ENCODE measurements at regions of chr12 and their contacts with region 1.

Region 1: DNA sequence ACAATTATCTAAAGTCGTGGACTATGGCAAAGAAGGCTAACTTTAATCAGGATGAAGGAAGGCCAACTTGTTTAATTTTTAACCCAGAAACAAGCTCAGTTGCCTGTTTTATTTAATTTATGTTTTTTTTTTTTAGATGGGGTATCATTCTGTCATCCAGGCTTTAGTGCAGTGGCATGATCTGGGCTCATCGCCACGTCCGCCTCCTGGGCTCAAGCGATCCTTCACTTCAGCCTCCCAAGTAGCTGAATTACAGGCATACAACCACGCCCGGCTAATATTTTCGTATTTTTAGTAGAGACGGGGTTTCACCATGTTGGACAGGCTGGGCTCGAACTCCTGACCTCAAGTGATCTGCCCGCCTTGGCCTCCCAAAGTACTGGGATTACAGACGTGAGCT is 19.7 kb downstream of the NUDT4 start:
- DNase-seq: no peak
- ATAC-seq: no peak
- H3K4me3 Mint-ChIP-seq: no peak overlapping the region
- H3K27ac Mint-ChIP-seq: no peak overlapping the region
- H3K4me1 Mint-ChIP-seq: peaks cover 11% of the 10 kb centered on the region
- H3K27me3 Mint-ChIP-seq: no peaks in the 10 kb centered on the region
- CTCF ChIP-seq: no peak

Region 2: DNA sequence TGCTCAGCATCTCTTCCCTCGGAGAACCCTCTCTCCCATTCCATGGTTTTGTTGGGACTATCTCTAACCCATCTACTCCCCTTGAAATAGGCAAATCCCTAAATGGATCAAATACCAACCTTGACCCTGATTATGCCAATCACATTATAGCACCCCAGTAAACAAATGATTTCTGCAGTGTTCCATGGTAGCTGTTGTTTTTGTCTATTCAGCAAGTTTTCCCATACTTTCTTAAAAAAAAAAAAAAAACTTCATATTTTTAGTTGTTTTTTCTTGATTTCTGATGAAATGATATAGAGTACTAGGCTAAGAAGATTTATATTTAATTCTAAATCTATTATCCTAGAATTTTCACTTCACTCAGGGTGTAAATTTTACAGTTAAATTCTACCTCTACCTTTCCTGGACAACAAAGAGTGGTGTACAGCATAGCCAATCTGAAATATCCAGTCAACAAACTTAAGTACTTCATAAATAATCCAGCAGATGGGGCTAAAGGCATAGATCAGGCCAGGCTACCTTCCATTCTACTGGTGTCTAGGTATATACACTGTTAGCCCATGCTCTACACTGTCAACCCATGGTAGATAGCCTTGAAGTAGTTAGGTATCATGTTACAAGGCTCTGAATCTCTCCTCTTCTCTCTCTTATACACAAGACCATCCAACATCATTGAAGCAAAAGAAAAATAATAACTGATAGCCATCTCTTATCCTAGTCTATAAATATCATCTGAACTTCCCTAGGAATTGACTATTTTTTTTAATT is 612.4 kb before region 1 on chr12:
- CTCF ChIA-PET with region 1: interaction called, 23 read pairs
- POLR2A ChIA-PET with region 1: interaction called, 3 read pairs
- intact Hi-C with region 1: loop called (anchors 2 kb)
- DNase-seq: no peak
- ATAC-seq: peak; percentile 98
- H3K4me3 Mint-ChIP-seq: no peak overlapping the region
- H3K27ac Mint-ChIP-seq: no peak overlapping the region
- H3K4me1 Mint-ChIP-seq: no peaks in the 10 kb centered on the region
- H3K27me3 Mint-ChIP-seq: no peaks in the 10 kb centered on the region
- CTCF ChIP-seq: no peak

Region 3: GRCh38 chr12:92943482-92944250 is 453.7 kb before region 1 on chr12:
- CTCF ChIA-PET with region 1: no interaction called
- POLR2A ChIA-PET with region 1: interaction called, 15 read pairs
- intact Hi-C with region 1: no loop called
- DNase-seq: no peak
- ATAC-seq: no peak
- H3K4me3 Mint-ChIP-seq: no peak overlapping the region
- H3K27ac Mint-ChIP-seq: peak overlapping the region; percentile 46
- H3K4me1 Mint-ChIP-seq: peaks cover 36% of the 10 kb centered on the region
- H3K27me3 Mint-ChIP-seq: no peaks in the 10 kb centered on the region
- CTCF ChIP-seq: no peak

Region 4: DNA sequence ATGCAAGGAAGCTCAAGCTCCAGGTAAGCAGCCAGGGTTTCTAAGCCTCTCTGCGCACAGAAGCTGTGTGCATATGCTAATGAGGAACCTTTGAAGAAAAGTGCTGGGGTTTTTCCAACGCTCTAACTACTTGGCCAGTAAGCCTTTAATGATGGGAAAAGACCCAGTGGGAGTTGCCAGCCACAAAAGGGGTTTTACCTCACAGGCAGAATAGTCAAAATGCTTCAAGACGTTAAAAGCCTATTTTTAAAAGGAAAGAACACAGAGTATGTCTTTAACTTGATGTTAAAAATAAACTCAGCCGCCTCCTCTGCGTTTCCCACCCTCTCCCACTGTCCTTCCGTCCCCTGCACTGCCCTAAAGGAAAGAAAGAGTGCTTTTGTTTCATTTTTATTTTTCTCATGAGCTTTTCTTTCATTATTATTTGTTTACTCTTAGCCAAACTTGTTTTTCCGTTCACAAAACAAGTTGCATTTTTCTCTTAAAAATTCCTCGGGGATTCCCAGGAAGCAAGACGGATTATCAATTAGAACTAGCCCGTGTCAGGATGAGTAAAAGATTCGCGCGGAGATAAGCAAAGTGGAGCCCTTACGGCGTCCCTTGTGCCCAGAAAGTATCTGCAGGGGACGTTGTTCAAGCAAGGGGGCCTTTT is 229.4 kb before region 1 on chr12:
- CTCF ChIA-PET with region 1: no interaction called
- POLR2A ChIA-PET with region 1: no interaction called
- intact Hi-C with region 1: loop called (anchors 5 kb)
- DNase-seq: no peak
- ATAC-seq: peak; percentile 80
- H3K4me3 Mint-ChIP-seq: peak overlapping the region; percentile 80
- H3K27ac Mint-ChIP-seq: peak overlapping the region; percentile 80
- H3K4me1 Mint-ChIP-seq: peaks cover 60% of the 10 kb centered on the region
- H3K27me3 Mint-ChIP-seq: no peaks in the 10 kb centered on the region
- CTCF ChIP-seq: no peak

Region 5: DNA sequence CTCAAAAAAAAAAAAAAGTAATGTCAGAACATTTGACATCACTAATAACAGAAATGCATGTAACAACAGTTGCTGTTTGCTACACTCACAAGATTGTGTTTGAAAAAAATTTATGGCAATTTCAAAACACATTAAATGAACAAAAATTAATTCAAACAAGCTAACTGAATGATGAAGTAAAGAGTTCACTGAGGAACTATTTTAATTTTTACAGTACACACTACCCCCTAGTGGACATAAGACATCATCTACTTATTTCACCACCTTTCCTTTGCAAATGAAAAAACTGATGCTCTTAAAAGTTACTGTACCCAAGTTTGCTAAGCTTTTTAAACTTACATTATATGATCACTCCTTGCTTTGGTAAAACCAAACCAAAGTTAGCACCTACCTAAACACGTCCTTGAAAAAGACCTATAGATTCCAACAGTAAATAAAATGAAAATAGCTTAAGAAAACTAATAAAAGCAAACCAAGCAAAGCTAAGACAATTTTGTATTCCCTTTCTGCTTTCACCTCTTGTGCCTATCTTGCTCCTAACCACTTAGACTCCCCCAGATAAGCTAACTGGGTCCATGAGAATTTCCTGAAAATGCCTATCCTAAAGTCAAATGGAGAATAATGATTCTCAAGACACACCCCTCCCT is 22.1 kb after region 1 on chr12:
- CTCF ChIA-PET with region 1: interaction called, 16 read pairs
- POLR2A ChIA-PET with region 1: no interaction called
- intact Hi-C with region 1: no loop called
- DNase-seq: no peak
- ATAC-seq: peak; percentile 56
- H3K4me3 Mint-ChIP-seq: no peak overlapping the region
- H3K27ac Mint-ChIP-seq: peak overlapping the region; percentile 31
- H3K4me1 Mint-ChIP-seq: peaks cover 87% of the 10 kb centered on the region
- H3K27me3 Mint-ChIP-seq: no peaks in the 10 kb centered on the region
- CTCF ChIP-seq: peak; percentile 68

Region 6: GRCh38 chr12:93461503-93461902 is 64.1 kb after region 1 on chr12:
- CTCF ChIA-PET with region 1: no interaction called
- POLR2A ChIA-PET with region 1: no interaction called
- intact Hi-C with region 1: no loop called
- DNase-seq: no peak
- ATAC-seq: no peak
- H3K4me3 Mint-ChIP-seq: no peak overlapping the region
- H3K27ac Mint-ChIP-seq: no peak overlapping the region
- H3K4me1 Mint-ChIP-seq: peaks cover 2% of the 10 kb centered on the region
- H3K27me3 Mint-ChIP-seq: no peaks in the 10 kb centered on the region
- CTCF ChIP-seq: no peak

Region 7: DNA sequence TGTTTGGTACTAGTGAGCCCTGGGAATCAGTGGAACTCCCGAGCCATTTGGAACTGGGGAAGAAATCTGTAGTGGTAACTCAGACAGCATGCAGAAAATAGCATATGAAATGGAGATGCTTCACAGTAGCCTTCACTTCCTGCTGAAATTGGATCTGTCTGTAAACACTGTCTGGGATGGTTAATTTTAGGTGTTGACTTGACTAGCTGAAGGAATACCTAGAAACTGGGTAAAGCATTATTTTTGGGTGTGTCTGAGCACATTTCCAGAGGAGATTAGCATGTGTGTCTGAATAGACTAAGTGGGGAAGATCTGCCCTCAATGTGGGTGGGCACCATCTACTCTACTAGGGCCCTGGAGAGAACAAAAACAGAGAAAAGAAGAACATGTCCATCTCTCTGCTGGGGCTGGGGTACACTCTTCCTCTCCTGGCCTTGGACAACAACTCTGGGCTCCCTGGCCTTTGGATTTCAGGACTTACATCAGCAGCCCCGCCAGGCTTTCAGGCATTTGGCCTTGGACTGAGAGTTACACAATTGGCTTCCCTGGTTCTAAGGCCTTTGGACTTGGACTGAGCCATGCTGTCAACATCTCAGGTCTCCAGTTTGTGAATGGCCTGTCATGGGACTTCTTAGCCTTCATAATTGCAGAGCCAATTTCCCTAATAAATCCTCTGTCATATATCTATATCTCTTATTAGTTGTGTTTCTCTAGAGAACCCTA is 265.8 kb after region 1 on chr12:
- CTCF ChIA-PET with region 1: no interaction called
- POLR2A ChIA-PET with region 1: no interaction called
- intact Hi-C with region 1: no loop called
- DNase-seq: no peak
- ATAC-seq: no peak
- H3K4me3 Mint-ChIP-seq: no peak overlapping the region
- H3K27ac Mint-ChIP-seq: no peak overlapping the region
- H3K4me1 Mint-ChIP-seq: no peaks in the 10 kb centered on the region
- H3K27me3 Mint-ChIP-seq: no peaks in the 10 kb centered on the region
- CTCF ChIP-seq: no peak